Activated CD8-positive, alpha-beta T cell treated with anti-CD3 and anti-CD28 coated beads, Interleukin-2, amount 10 ng/mL, durations not matched to agents 7 days and 5 days (primary cell): ENCODE measurements at regions of chr3 and their contacts with region 1.

Region 1: DNA sequence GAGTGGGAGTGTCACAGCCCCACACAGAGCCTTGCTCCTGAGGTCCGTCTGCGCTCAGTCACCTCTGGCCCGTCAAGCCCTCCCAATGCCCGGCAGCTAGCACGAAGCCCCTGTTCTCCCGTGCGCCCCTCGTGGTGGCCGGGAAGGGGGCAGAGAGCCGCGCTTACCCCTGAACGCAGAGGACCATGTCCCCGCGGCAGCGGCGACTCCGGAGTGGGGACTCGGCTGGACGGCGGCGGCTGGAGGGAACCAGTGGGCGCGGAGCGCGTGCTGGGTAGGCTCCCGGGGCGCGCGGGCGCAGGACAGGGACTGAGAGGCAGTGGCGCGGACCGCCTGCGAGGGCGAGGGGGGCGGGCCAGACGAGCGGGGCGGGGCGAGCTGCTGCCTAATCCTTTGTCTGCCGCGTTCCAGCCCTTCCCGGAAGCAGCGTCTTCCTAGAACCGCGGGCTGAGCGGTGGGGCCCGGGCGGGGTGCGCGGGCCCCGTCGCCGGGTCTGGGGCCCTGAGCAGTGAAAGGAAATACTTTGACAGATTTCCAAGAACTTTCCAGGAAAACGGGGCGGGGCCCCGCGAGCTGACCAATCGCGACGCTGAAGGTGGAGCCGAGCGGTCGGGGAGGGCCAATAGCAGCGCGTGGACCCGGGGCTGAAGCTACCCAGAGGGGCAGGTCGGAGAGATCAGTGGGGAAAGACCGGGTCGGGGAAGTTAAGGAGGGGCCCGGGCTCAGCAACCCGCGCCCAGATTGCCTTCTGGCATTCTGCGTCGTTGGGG is at the start of gene CISH:
- DNase-seq: peak; percentile 99
- ATAC-seq: peak; percentile 73
- H3K4me3 Mint-ChIP-seq: peak within 1 kb of the TSS; percentile 94
- H3K27ac Mint-ChIP-seq: peak within 1 kb of the TSS; percentile 97
- H3K4me1 Mint-ChIP-seq: peaks cover 31% of the 10 kb centered on the region
- H3K27me3 Mint-ChIP-seq: no peaks in the 10 kb centered on the region
- total RNA-seq, gene CISH: 380 to 394 TPM

Region 2: GRCh38 chr3:50337191-50337841 is 274.3 kb before region 1 on chr3:
- CTCF ChIA-PET with region 1: interaction called, 3 read pairs
- POLR2A ChIA-PET with region 1: interaction called, 51 read pairs
- DNase-seq: peak; percentile 99
- ATAC-seq: peak; percentile 75
- H3K4me3 Mint-ChIP-seq: peak overlapping the region; percentile 92
- H3K27ac Mint-ChIP-seq: peak overlapping the region; percentile 96
- H3K4me1 Mint-ChIP-seq: peaks cover 56% of the 10 kb centered on the region
- H3K27me3 Mint-ChIP-seq: no peaks in the 10 kb centered on the region

Region 3: GRCh38 chr3:50550079-50550741 is 61.4 kb before region 1 on chr3:
- CTCF ChIA-PET with region 1: interaction called, 27 read pairs
- POLR2A ChIA-PET with region 1: interaction called, 4 read pairs
- DNase-seq: peak; percentile 80
- ATAC-seq: peak; percentile 80
- H3K4me3 Mint-ChIP-seq: no peak overlapping the region
- H3K27ac Mint-ChIP-seq: no peak overlapping the region
- H3K4me1 Mint-ChIP-seq: peaks cover 13% of the 10 kb centered on the region
- H3K27me3 Mint-ChIP-seq: no peaks in the 10 kb centered on the region

Region 4: GRCh38 chr3:50587806-50588758 is 23.6 kb before region 1 on chr3:
- CTCF ChIA-PET with region 1: interaction called, 1,321 read pairs
- POLR2A ChIA-PET with region 1: interaction called, 970 read pairs
- DNase-seq: peak; percentile 78
- ATAC-seq: peak; percentile 41
- H3K4me3 Mint-ChIP-seq: peak overlapping the region; percentile 62
- H3K27ac Mint-ChIP-seq: peak overlapping the region; percentile 98
- H3K4me1 Mint-ChIP-seq: peaks cover 97% of the 10 kb centered on the region
- H3K27me3 Mint-ChIP-seq: no peaks in the 10 kb centered on the region

Region 5: DNA sequence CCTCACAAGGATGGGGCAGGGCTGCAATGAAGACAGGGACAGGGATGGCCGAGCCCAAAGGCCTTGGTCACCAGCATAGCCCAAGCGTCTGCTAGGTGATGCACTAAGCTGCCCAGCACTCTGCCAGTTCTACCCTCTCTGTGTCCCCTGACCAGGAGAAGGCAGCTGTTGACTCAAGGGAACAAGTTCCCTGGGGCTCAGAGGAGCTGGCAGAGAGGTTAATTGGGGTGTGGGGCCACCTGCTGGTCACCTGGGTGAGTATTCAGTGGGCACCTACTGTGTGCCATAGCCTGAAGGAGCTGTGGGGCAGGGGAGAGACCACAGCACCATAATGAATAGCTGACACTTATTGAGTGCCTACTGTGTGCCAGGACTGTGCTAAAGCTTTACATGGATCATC is 41.1 kb after region 1 on chr3:
- CTCF ChIA-PET with region 1: interaction called, 219 read pairs
- POLR2A ChIA-PET with region 1: interaction called, 18 read pairs
- DNase-seq: peak; percentile 66
- ATAC-seq: peak; percentile 72
- H3K4me3 Mint-ChIP-seq: no peak overlapping the region
- H3K27ac Mint-ChIP-seq: peak overlapping the region; percentile 21
- H3K4me1 Mint-ChIP-seq: peaks cover 23% of the 10 kb centered on the region
- H3K27me3 Mint-ChIP-seq: no peaks in the 10 kb centered on the region

Region 6: GRCh38 chr3:51371943-51372557 is 760.4 kb after region 1 on chr3:
- CTCF ChIA-PET with region 1: interaction called, 29 read pairs
- POLR2A ChIA-PET with region 1: interaction called, 3 read pairs
- DNase-seq: peak; percentile 75
- ATAC-seq: peak; percentile 61
- H3K4me3 Mint-ChIP-seq: no peak overlapping the region
- H3K27ac Mint-ChIP-seq: no peak overlapping the region
- H3K4me1 Mint-ChIP-seq: no peaks in the 10 kb centered on the region
- H3K27me3 Mint-ChIP-seq: no peaks in the 10 kb centered on the region